ENCODE measurements at regions of chr1 and their contacts with region 1.

Region 1: DNA sequence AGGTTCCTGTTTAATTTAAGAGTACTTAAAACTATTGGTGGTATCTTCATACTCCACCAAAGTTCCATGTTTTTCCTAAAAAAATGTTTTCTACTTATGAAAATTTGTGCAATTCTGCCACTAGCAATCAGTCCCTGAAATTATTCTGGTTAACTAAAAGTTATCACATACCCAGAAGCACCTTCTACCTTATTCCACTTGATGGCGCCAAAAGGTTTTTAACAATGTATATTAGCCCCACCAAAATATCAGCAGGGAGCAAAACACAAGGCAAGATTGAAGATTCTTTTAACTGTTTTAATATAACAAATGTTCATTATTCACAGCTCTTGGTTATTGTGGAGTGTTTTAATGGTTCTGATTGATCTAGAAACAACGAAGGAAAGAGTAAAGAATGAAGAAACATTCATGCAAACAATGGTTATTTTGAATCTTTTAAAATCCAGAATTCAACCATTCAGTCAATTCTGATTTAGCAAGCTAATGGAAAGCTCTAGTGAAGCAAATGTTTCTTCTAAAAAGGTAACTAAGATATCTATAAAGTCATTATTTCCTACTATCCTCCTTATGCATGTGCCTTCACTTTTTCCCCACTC is 67.2 kb downstream of the TTLL7 start:
- DNase-seq: peak in 12 of 42 donors; percentile 29 to 78 (median 51)

Region 2: DNA sequence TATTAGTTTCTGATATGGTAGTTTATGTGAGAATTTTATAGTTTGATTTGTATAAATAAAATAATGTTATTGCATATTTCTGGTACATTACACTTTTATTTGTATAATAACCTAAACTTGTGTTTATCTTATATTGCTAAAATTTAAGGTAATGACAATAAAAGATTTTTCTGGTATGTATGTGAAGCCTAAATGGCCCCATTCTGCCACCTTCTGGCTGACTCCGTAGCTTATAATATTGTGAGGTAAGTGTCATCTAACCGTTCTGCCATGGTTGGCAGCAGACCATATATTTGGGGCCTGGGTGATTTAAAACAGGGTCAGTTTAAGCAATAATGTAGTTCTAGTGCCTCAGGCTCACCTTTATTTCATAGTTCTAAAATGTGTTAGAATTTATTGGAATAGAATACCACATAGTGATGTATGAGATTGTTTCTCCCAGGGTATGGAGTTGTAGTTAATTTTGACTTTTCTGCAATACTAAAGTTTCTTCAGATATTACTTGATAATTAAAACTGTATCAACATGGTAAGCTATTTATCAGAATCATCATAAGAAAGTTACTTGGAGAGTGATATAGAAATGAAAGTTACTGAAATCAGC is 191.1 kb after region 1 on chr1:
- intact Hi-C with region 1: loop called (anchors 5 kb)
- DNase-seq: peak; percentile 7 to 89 (median 70)

Region 3: DNA sequence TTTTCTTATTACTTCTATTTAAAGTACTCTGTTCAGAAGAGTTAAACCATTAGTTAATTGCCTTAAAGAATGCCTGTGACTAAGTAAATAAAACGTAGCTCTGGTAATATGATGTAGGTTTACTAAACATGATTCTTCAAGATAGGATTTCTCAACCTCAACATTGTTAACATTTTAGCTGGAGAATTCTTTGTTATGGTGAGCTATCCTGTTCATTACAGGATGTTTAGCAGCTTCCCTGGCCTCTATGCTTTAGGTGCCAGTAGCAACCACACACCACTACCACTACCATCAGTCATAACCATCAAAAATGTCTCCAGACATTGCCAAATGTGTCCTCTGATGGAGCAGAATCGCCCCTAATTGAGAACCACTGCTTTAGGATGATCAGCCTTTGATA is 558.0 kb after region 1 on chr1:
- intact Hi-C with region 1: no loop called
- DNase-seq: no peak